Prostate gland (tissue), 2 donors: ENCODE measurements at regions of chr11 and their contacts with region 1.

Region 1: DNA sequence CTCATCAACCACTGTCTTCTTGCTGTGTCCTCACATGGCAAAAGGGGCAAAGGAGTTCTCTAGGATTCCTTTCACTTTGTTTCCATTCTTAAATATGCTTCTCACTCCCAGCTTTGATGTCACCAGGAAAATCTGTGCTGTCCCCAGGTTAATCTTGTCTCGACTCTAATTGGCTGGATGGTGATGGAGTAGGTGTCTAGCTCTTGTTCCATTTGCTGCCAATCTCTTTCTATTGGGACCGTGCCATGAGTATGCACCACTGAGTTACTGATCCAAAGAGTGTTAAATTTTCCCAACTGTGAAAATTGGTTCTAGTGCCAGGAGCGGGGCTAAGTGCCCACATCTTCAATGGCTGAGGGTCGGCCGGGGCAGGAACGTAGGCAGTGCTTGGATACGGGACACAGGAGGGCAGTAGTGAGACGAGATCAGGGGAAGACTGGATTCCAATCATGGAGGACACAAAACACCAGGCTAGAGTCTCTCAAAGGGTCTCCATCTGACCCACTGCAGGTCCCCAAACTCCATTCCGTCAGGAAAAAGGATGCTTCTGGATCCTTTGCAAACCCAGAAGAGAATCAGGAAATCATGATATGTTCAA is 47.7 kb upstream of the CSNK2A3 start:
- DNase-seq: no peak
- H3K4me3 ChIP-seq: no peak overlapping the region
- H3K27ac ChIP-seq: no peak overlapping the region
- H3K4me1 ChIP-seq: no peaks in the 10 kb centered on the region
- H3K27me3 ChIP-seq: no peaks in the 10 kb centered on the region
- CTCF ChIP-seq: no peak
- POLR2A ChIP-seq: no peak

Region 2: DNA sequence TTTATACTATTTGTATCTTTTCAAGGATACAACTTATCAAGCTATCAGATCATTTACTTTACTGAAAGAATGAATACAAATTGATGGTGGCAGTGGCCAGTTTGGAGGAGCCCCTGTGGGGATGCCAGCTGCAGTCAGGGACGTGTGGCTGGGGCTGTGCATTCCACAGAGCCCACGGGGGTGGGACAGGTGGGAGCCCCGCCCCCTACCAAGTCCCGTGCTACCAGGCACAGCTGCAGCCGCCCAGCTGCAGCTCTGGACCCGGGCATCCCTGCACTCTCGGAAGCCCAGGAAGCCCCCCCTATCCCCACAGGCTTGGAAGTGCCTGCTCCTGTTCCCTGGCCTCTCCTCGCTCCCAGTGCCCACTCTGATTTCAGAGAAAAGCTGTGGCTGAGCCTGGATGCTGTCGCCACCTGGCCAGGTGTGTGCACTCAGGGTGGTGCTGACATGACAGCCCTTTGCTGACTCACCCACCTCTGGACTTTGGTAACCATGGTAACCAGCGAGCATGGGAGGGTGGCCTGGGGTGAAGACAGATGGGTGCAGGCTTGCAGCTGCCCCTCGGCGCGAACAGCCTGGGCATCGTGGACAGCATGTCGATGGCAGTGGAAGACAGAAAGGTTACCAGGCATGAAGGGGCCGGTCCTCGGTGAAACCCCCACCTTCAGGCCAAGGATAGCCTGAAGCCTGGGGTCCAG is 1244.8 kb before region 1 on chr11:
- intact Hi-C with region 1: no loop called
- DNase-seq: no peak
- H3K4me3 ChIP-seq: no peak overlapping the region
- H3K27ac ChIP-seq: no peak overlapping the region
- H3K4me1 ChIP-seq: no peaks in the 10 kb centered on the region
- H3K27me3 ChIP-seq: no peaks in the 10 kb centered on the region
- CTCF ChIP-seq: no peak
- POLR2A ChIP-seq: no peak

Region 3: DNA sequence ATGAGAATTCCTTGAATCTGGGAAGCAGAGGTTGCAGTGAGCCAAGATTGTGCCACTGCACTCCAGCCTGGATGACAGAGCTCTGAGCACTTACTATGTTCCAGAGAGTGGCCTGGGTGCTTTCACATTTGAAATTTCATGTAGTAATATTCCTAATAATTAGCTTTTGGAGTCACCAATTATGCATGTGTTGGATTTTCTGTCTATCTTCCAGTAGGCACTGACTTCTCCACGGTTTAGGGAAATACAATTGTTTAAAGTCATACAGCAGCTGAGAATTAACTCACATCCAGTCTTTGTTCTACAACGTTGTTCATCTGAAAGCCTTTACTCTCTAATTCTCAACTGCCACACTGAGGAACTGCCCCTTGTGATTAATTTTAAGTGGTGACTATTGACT is 197.8 kb before region 1 on chr11:
- intact Hi-C with region 1: no loop called
- DNase-seq: no peak
- H3K4me3 ChIP-seq: no peak overlapping the region
- H3K27ac ChIP-seq: no peak overlapping the region
- H3K4me1 ChIP-seq: no peaks in the 10 kb centered on the region
- H3K27me3 ChIP-seq: no peaks in the 10 kb centered on the region
- CTCF ChIP-seq: no peak
- POLR2A ChIP-seq: no peak

Region 4: DNA sequence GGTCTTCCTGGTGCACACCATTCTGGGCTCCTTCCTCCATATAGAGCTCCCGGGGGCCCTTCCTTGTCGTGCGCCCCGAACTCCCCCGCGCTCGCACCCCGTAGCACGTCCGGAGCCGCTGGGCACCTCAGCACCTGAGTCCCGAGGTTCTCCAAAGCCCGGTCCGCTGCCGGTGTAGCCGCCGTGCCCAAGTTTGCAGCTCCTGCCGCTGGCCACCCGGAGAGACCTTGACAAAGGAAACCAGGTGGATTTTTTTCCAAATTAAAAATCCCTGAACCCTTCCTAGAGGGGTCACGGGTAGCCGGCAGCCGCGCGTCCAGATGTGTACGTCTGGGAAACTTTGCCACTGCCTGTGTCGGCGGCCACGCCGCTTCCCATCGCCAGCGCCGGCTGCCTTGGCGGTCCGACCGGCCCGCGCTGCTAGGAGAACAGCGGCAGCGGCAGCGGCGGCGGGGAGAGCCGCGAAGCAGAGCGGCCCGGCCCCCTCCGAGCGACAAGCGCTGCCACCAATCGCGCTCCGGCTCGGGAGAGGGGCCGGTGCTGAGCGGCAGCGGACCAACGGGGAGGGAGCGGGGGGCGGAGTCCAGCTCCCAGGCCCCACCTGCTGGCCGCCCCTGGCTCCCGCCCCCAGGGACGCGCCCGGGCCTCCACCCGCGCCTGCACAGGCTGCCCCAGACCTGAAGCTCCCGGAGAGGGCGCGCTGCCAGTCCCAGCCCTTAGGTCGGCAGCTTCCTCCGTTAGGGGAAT is 221.0 kb after region 1 on chr11 and contains the start of gene GALNT18:
- intact Hi-C with region 1: loop called (anchors 10 kb)
- DNase-seq: peak; percentile 95
- H3K4me3 ChIP-seq: peak within 1 kb of the TSS; percentile 43 to 49
- H3K27ac ChIP-seq: peak within 1 kb of the TSS; percentile 73 to 78
- H3K4me1 ChIP-seq: peaks cover 8% of the 10 kb centered on the region
- H3K27me3 ChIP-seq: no peaks in the 10 kb centered on the region
- CTCF ChIP-seq: peak; percentile 39 to 77 (median 65)
- POLR2A ChIP-seq: peak; percentile 88
- total RNA-seq, gene GALNT18: 29.4 to 105 TPM